Vagina (tissue), 2 donors: ENCODE measurements at regions of chr2 and their contacts with region 1.

Region 1: GRCh38 chr2:240056678-240057077 is 3.4 kb upstream of the OR6B3 start:
- DNase-seq: no peak
- H3K4me3 ChIP-seq: no peak overlapping the region
- H3K27ac ChIP-seq: no peak overlapping the region
- H3K4me1 ChIP-seq: no peaks in the 10 kb centered on the region
- H3K27me3 ChIP-seq: no peaks in the 10 kb centered on the region
- CTCF ChIP-seq: no peak
- POLR2A ChIP-seq: no peak

Region 2: GRCh38 chr2:240149943-240150784 is 93.5 kb after region 1 on chr2:
- intact Hi-C with region 1: loop called (anchors 5 kb)
- DNase-seq: no peak
- H3K4me3 ChIP-seq: no peak overlapping the region
- H3K27ac ChIP-seq: no peak overlapping the region
- H3K4me1 ChIP-seq: no peaks in the 10 kb centered on the region
- H3K27me3 ChIP-seq: no peaks in the 10 kb centered on the region
- CTCF ChIP-seq: peak in 1 of 3 experiments; percentile 17
- POLR2A ChIP-seq: no peak